H1 (cell line): ENCODE measurements at regions of chr18 and their contacts with region 1.

Region 1: DNA sequence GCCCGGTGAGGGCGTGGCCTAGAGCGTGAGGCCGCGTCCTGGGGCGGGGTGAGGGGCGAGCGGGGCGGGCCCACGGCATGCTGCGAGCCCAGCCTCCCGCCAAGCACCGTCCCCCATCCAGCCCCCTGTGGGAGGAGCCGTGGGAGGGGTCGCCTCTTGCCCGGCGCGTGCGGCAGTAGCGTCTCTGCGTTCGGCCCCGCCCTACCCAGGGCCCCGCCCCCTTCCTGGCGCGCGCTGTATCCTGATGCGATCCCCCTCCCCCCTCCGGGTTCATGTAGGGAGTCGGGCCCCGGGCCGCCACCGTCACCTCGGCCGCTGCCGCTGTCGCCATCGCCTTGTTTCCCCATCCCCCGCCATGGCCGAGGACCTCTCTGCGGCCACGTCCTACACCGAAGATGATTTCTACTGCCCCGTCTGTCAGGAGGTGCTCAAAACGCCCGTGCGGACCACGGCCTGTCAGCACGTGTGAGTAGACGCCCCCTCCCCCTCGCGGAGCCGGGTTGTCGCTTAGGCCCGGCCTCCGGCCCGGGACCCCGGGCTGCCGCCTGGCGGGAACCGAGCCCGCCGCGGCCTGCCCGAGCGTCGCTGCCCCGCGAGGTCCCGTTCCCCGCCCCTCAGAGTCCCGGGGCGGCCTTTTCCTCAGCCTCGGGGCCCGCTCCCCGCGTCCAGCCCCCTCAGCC is 888 bp downstream of the RNF138 start:
- DNase-seq: peak; percentile 89 to 99
- H3K4me3 ChIP-seq: peak overlapping the region; percentile 84 to 92 (median 88)
- H3K27ac ChIP-seq: peak overlapping the region; percentile 74
- H3K4me1 ChIP-seq: peaks cover 0 to 3% (median 3%) of the 10 kb centered on the region in 4 experiments; a peak in 3 of 7 replicates
- H3K27me3 ChIP-seq: no peaks in the 10 kb centered on the region
- CTCF ChIP-seq: no peak
- EP300 ChIP-seq: 0 out of 3 replicates have a peak, but pooled peaks of 1 of the 2 experiments have one; percentile 3
- POLR2A ChIP-seq: peak; percentile 32 to 82
- RAD21 ChIP-seq: no peak

Region 2: GRCh38 chr18:31760695-31761094 is 331.9 kb before region 1 on chr18 and contains the start of gene SLC25A52:
- CTCF ChIA-PET with region 1: no interaction called
- POLR2A ChIA-PET with region 1: no interaction called
- DNase-seq: no peak
- H3K4me3 ChIP-seq: no peak within 1 kb of the TSS
- H3K27ac ChIP-seq: no peak within 1 kb of the TSS
- H3K4me1 ChIP-seq: no peaks in the 10 kb centered on the region
- H3K27me3 ChIP-seq: no peaks in the 10 kb centered on the region
- CTCF ChIP-seq: no peak
- EP300 ChIP-seq: no peak
- POLR2A ChIP-seq: no peak
- RAD21 ChIP-seq: no peak
- total RNA-seq, gene SLC25A52: not detected in 2 replicates

Region 3: DNA sequence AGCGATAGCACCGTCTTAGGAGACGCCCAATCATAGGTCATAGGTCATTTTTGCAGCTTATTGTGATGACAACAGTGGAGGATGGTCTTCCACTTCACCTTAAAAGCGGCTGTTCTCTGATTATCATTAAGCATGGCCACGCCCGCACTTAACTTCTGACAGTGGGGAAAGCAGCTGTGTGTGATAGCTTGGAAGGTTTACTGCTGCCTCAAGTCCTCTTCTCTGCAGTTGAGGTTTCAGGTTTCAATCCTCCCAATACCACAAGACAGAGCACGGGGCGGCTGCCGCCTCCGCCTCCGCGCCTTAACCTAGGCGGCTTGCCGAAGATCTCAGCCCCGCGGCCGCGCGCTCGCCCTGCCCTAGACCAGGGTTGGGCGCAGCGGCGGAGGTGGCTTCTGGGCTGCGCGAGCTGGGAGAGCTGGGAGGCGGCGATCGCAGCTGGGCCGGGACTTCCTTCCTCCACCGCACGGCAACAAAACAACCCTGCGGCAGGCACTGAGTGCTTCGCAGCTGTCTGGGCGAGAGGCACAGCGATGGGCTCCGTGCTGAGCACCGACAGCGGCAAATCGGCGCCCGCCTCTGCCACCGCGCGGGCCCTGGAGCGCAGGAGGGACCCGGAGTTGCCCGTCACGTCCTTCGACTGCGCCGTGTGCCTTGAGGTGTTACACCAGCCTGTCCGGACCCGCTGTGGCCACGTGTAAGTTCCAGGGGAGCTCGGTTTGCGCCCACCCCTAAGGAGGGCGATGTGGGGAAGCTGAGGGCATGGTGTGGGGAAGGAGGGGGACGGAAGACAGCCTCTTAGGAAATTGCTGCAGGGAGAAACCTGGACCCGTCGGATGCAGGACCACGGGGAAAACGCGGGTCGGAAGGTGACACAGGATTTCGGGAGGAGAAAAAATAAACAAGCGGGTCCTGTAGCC is 74.0 kb before region 1 on chr18 and contains the start of gene RNF125:
- CTCF ChIA-PET with region 1: no interaction called
- POLR2A ChIA-PET with region 1: interaction called, 10 read pairs
- DNase-seq: peak; percentile 78 to 85
- H3K4me3 ChIP-seq: peak within 1 kb of the TSS; percentile 59 to 81 (median 69)
- H3K27ac ChIP-seq: peak within 1 kb of the TSS; percentile 35; the same call in 1 of the 2 replicates
- H3K4me1 ChIP-seq: peaks cover 0 to 10% (median 4%) of the 10 kb centered on the region in 4 experiments; a peak in 4 of 7 replicates
- H3K27me3 ChIP-seq: peaks cover 0 to 4% (median under 1%) of the 10 kb centered on the region in 4 experiments; a peak in 3 of 7 replicates
- CTCF ChIP-seq: no peak
- EP300 ChIP-seq: no peak
- POLR2A ChIP-seq: peak; percentile 61 to 62
- RAD21 ChIP-seq: peak in 1 of 2 experiments; percentile 7; a peak in 1 of 4 replicates
- total RNA-seq, gene RNF125: 14.3 and 15.2 TPM in 2 replicates

Region 4: GRCh38 chr18:32029558-32029957 is 63.0 kb before region 1 on chr18:
- CTCF ChIA-PET with region 1: no interaction called
- POLR2A ChIA-PET with region 1: no interaction called
- DNase-seq: no peak
- H3K4me3 ChIP-seq: no peak overlapping the region
- H3K27ac ChIP-seq: no peak overlapping the region
- H3K4me1 ChIP-seq: no peaks in the 10 kb centered on the region; a peak in 1 of 7 replicates
- H3K27me3 ChIP-seq: no peaks in the 10 kb centered on the region
- CTCF ChIP-seq: no peak
- EP300 ChIP-seq: no peak
- POLR2A ChIP-seq: no peak
- RAD21 ChIP-seq: no peak

Region 5: GRCh38 chr18:32104530-32104929 is 12.0 kb after region 1 on chr18:
- CTCF ChIA-PET with region 1: no interaction called
- POLR2A ChIA-PET with region 1: interaction called, 10 read pairs
- DNase-seq: no peak
- H3K4me3 ChIP-seq: no peak overlapping the region
- H3K27ac ChIP-seq: no peak overlapping the region
- H3K4me1 ChIP-seq: no peaks in the 10 kb centered on the region
- H3K27me3 ChIP-seq: no peaks in the 10 kb centered on the region
- CTCF ChIP-seq: no peak
- EP300 ChIP-seq: no peak
- POLR2A ChIP-seq: no peak
- RAD21 ChIP-seq: no peak